Activated CD8-positive, alpha-beta memory T cell treated with anti-CD3 and anti-CD28 coated beads, Interleukin-2, amount 10 ng/mL, durations not matched to agents 7 days and 5 days (primary cell): ENCODE measurements at regions of chr9 and their contacts with region 1.

Region 1: DNA sequence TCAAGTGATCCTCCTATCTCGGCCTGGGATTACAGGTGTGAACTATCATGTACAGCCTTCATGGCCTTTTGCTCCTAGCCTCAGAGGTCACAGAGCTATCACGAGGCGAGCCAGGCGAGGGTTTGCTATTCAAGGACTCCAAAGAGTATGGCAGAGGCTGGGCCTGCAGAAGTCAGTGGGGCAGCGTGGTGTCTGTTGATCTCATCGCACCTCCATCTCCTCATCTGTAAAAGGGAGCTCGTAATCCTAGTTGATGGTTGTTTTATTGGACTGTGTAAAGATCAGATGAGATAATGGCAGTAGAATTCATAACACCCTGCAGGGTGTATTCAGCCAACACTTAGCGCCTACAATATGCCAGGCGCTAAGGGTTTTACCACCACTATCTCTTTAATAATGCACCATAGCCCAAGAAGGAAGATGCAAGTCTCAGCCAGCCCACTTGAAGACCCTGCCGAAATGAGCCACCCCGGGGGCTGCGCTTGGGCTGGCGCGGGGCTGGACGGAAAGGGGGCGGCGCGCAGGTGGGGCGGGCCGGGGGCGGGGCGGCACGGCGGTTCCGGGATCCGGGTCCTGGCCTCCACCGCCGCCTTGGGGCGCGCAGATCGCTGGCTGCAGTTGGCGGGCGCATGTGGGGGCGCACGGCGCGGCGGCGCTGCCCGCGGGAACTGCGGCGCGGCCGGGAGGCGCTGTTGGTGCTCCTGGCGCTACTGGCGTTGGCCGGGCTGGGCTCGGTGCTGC is at the start of gene GALNT12:
- DNase-seq: peak; percentile 67
- ATAC-seq: peak; percentile 87
- H3K4me3 Mint-ChIP-seq: peak within 1 kb of the TSS; percentile 76
- H3K27ac Mint-ChIP-seq: no peak within 1 kb of the TSS
- H3K4me1 Mint-ChIP-seq: peaks cover 31% of the 10 kb centered on the region
- H3K27me3 Mint-ChIP-seq: peaks cover 47% of the 10 kb centered on the region
- total RNA-seq, gene GALNT12: 3.5 to 9.9 TPM

Region 2: DNA sequence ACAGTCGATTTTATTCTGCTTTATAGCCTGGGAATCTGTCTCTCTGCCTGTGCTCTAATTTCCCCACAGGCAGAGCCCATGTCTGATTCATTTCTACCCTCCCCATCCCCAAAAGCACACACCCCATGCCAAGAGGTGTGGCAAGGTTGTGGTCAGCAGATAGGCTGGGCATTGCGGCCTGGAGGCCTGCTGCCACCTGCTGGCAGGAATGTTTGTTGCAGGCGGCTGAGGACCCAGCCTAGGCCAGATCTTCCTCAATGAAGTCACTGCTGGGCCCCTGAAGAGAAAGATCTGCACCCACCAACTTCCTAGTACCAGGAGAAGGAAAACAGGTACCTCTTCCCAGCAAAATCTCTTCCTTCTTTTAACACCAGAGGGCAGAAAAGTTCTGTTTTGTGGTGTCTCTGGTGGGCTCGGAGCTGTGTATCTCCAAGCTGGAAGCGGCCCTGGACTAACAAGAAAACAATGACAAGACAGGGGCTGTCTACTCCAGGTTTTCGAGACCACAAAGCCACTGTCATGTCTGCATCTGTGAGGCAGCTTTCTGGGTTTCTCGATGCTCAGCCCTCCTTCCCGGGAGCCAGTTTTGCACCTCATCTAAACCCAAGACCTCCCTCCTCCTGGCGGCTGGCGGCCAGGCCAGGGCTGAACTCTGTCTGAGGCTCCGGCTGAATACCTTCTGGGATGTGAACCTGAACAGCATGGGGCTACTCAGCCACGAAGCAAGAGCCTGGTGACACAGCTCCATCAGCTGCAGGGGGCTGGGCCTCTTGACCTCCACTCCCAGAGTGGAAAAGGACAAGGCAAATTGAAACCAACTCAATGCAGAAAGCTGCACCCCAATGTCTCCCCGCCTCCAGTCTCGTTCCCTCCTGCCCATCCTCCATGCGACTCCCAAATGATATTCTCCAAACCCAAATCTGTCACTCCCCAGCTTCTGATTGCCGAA is 15.8 kb before region 1 on chr9:
- CTCF ChIA-PET with region 1: interaction called, 33 read pairs
- DNase-seq: peak; percentile 76
- ATAC-seq: peak; percentile 72
- H3K4me3 Mint-ChIP-seq: no peak overlapping the region
- H3K27ac Mint-ChIP-seq: no peak overlapping the region
- H3K4me1 Mint-ChIP-seq: peaks cover 16% of the 10 kb centered on the region
- H3K27me3 Mint-ChIP-seq: peaks cover 6% of the 10 kb centered on the region

Region 3: DNA sequence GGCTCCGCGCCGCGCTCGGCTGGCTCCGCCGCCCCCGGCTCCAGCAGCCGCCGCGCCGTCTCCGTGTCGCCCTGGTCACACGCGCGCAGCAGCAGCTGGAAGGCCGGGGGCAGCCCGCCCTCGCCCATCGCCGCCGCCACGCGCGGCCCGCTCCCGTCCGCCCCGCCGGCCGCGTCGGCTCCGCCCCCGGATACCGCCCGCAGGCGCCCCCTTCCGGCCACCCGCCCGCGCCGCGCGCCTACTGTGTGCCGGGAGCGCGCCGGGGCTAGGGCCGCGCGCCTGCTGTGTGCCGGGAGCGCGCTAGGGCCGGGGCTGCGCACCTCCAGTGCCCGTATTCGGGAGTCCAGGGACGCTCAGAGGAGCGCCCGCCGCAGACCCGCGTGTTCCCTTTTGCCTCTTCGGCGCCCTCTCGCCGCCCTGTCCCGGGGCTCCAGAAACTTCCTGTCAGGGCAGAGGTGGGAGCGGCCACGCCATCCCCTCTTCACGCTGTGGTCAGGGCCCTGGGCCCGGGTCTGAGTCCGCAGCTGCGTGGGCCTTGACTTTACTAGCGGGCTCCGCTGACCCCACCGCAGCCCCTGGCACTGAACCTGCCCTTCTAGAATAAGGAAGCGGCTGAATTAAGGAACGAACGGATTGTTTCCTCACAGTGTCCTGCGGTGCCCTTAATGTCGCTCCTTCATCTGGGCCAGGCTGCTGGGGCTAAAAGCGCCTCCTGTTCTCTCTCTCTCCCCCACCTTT is 10.7 kb before region 1 on chr9 and contains the start of gene ANKS6:
- CTCF ChIA-PET with region 1: interaction called, 33 read pairs
- DNase-seq: peak; percentile 80
- ATAC-seq: peak; percentile 92
- H3K4me3 Mint-ChIP-seq: peak within 1 kb of the TSS; percentile 73
- H3K27ac Mint-ChIP-seq: peak within 1 kb of the TSS; percentile 55
- H3K4me1 Mint-ChIP-seq: peaks cover 14% of the 10 kb centered on the region
- H3K27me3 Mint-ChIP-seq: peaks cover 14% of the 10 kb centered on the region
- total RNA-seq, gene ANKS6: 6.5 to 9.2 TPM